Activated CD4-positive, alpha-beta memory T cell treated with anti-CD3 and anti-CD28 coated beads, Interleukin-2, amount 10 ng/mL, durations not matched to agents 7 days and 5 days (primary cell): ENCODE measurements at regions of chr1 and their contacts with region 1.

Region 1: GRCh38 chr1:110674337-110675059 is at the start of gene KCNA3:
- DNase-seq: peak; percentile 74
- H3K4me3 Mint-ChIP-seq: peak within 1 kb of the TSS; percentile 100
- H3K27ac Mint-ChIP-seq: peak within 1 kb of the TSS; percentile 89
- H3K4me1 Mint-ChIP-seq: peaks cover 28% of the 10 kb centered on the region
- H3K27me3 Mint-ChIP-seq: no peaks in the 10 kb centered on the region
- total RNA-seq, gene KCNA3: 84.9 to 86.2 TPM

Region 2: DNA sequence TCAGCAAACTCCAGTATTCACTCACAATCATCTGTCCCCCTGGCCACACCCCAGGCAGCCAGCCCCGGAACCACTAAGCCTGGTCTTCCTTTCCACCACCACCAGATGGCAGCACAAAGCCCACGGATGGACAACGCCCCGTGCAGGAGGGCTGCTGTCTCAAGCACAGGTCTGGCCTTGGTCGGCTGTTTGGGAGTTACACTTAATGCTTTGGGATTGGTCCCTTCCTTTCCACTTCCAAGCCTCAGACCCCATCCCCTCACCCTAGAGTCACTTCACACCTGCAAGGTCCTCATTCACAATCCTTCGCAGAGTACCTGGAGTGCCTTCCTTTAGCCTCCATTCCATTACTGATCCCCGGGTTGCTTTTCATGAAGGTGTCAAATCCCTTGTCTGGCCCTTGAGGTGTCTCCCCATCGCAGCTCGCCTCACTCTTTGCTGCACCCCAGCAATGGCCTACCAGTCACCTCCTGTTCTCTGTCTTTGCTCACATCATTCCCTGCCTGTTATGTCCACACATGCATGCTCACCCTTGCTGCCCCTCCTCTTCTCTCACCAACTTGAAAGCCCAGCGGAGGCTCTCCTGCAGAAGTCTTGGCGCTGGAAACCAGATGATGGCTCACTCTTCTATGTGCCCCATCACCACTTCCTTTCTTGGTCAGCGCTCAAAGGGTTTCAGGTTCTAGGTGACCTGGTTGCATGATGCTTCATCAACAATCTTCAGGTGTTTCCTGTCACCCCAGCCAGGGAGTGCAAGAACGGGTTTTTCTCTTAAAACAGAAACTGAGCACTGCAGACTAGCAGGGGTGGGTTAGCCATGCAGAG is 43.4 kb before region 1 on chr1:
- CTCF ChIA-PET with region 1: interaction called, 7 read pairs
- POLR2A ChIA-PET with region 1: interaction called, 206 read pairs
- DNase-seq: peak; percentile 92
- H3K4me3 Mint-ChIP-seq: no peak overlapping the region
- H3K27ac Mint-ChIP-seq: no peak overlapping the region
- H3K4me1 Mint-ChIP-seq: peaks cover 68% of the 10 kb centered on the region
- H3K27me3 Mint-ChIP-seq: no peaks in the 10 kb centered on the region

Region 3: GRCh38 chr1:110657351-110657750 is 17.1 kb before region 1 on chr1:
- CTCF ChIA-PET with region 1: interaction called, 5 read pairs
- POLR2A ChIA-PET with region 1: interaction called, 157 read pairs
- DNase-seq: no peak
- H3K4me3 Mint-ChIP-seq: no peak overlapping the region
- H3K27ac Mint-ChIP-seq: no peak overlapping the region
- H3K4me1 Mint-ChIP-seq: peaks cover 44% of the 10 kb centered on the region
- H3K27me3 Mint-ChIP-seq: no peaks in the 10 kb centered on the region

Region 4: GRCh38 chr1:110879758-110880606 is 205.5 kb after region 1 on chr1:
- CTCF ChIA-PET with region 1: no interaction called
- POLR2A ChIA-PET with region 1: interaction called, 166 read pairs
- DNase-seq: peak; percentile 82
- H3K4me3 Mint-ChIP-seq: peak overlapping the region; percentile 97
- H3K27ac Mint-ChIP-seq: peak overlapping the region; percentile 100
- H3K4me1 Mint-ChIP-seq: peaks cover 63% of the 10 kb centered on the region
- H3K27me3 Mint-ChIP-seq: no peaks in the 10 kb centered on the region